AG04449 (cell line): ENCODE measurements at regions of chr1 and their contacts with region 1.

Region 1: DNA sequence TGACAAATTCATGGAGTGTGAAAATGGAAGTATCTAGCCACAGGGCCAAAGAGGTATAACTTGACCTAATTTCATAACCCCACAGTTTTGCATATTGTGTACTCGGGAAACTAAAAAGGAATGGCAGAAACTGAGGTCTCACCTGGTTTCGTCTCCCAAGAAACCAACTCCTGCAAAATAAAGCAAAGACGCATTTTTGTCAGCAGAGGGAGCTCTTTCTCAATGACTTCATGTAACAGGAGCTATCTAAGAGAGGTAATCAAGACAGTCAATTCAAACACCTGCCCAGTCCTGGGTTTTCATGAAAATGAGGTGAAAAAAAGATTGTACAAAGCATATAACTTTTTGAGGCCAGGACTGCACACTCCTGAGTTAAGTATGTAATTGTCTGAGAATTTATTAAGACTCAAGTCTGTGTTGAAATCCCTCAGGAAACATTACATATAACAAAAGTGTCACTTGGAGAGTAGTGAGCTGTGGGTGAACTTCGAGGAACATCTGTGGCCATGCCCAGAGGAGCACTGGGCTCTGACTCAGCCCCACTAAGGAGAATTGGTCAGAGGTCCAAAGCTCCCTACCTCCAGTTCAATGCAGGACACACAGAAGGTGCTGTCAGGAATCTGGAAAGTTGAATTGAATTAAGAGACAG is 17.6 kb downstream of the FCRL4 start:
- DNase-seq: peak; percentile 4
- H3K4me3 ChIP-seq: no peak overlapping the region
- CTCF ChIP-seq: peak; percentile 60

Region 2: GRCh38 chr1:157562515-157562914 is 17.8 kb before region 1 on chr1:
- CTCF ChIA-PET with region 1: interaction called, 10 read pairs
- POLR2A ChIA-PET with region 1: no interaction called
- DNase-seq: no peak
- H3K4me3 ChIP-seq: no peak overlapping the region
- CTCF ChIP-seq: no peak

Region 3: GRCh38 chr1:157691285-157691920 is 111.1 kb after region 1 on chr1:
- CTCF ChIA-PET with region 1: interaction called, 20 read pairs
- POLR2A ChIA-PET with region 1: no interaction called
- DNase-seq: peak; percentile 4
- H3K4me3 ChIP-seq: no peak overlapping the region
- CTCF ChIP-seq: peak; percentile 45

Region 4: GRCh38 chr1:157831968-157832626 is 251.8 kb after region 1 on chr1:
- CTCF ChIA-PET with region 1: no interaction called
- POLR2A ChIA-PET with region 1: no interaction called
- DNase-seq: no peak
- H3K4me3 ChIP-seq: no peak overlapping the region
- CTCF ChIP-seq: no peak

Region 5: DNA sequence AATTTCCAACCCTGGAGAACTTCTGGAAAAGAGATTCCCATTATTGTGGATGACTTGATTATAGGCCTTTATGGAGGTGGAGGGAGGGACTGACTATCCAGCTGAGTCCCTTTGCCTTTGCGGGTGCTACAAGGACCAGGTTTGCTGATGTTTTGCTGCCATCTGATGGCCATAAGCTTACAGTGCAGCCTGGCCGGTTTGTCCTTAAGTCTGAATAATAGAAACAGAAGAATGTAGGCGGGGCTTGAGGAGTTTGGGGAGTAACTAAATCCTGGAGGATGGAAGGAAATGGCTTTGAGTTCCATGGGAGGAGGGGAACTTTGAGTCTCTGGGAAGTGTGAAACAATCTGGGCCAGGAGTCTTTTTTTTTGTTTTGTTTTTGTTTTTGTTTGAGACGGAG is 544.7 kb after region 1 on chr1:
- CTCF ChIA-PET with region 1: interaction called, 51 read pairs
- POLR2A ChIA-PET with region 1: no interaction called
- DNase-seq: peak; percentile 71
- H3K4me3 ChIP-seq: no peak overlapping the region
- CTCF ChIP-seq: peak; percentile 87